Natural killer cell (primary cell): ENCODE measurements at regions of chr14 and their contacts with region 1.

Region 1: DNA sequence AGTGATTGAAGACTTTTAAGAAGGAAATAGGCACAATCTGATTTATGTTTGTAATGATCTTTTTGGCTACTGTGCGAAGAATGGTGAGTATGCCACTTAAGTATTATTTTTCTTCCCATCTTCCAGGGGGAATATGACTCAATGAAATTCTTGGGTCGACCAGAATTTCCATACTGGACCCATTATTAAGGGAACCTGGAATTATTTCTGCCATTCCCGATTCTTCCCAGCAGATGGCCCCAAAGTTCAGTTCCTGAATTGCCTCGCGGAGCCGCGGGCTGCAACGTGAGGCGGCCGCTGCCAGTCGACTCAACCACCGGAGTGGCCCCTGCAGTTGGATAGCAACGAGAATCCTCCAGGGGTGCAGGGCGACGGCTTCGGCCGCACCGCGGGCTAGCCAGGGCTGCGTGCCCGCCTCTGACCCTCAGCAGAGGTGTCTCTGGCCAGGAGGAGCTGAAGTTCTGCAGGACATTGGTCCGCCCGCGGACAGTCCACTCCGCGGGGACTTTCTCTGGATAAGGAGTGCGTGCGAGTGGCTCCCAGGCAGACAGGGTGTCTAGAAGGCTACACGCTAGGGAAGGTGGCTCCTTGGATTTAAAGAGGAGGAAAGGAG is 628 bp upstream of the TSHR start:
- DNase-seq: peak; percentile 60 to 87
- ATAC-seq: peak; percentile 80 to 82 (median 81)
- H3K4me3 ChIP-seq: peak overlapping the region; percentile 43
- H3K4me3 Mint-ChIP-seq: peak overlapping the region; percentile 89
- H3K27ac ChIP-seq: no peak overlapping the region
- H3K27ac Mint-ChIP-seq: peak overlapping the region; percentile 35 to 82
- H3K4me1 ChIP-seq: peaks cover 14% of the 10 kb centered on the region
- H3K4me1 Mint-ChIP-seq: peaks cover 22 to 24% of the 10 kb centered on the region in 2 donors
- H3K27me3 ChIP-seq: peaks cover 7% of the 10 kb centered on the region
- H3K27me3 Mint-ChIP-seq: peaks cover 33 to 46% of the 10 kb centered on the region in 2 donors
- CTCF ChIP-seq: peak; percentile 79

Region 2: DNA sequence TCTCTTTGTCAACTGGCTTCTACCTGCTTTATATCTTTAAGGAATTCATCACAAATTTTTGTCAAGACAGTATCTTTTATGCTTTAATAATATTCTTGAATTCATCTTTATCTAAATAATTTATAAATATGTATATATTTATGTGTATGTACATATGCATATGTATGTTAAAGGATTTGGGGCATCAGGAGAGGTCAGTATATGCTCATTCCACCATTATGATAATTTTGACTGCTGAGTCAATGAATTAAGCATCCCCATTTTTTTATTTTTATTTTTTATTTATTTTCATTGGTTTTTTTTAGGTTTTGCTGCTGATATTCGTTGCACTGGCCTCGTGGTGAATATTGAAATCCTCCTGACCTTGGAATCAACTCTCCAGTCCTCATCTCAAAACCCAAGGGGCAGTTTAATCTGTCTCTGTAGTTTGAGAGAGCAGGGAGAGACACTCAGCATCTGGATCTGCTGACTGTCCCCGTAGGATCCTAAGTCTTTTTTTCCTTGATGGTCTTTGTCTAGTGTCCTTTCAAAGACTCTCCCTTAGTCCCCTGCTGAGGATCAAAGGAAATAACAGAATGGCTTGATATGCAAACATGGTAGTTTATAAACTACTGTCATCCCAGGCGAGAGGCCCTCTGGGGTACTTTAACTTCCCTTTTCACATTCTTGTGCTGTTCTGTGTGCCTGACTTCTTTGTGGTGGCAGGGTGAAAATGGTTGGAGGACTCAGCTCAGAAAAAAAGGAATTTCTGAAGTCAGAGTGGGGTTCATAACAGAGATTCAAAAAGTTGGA is 962.2 kb before region 1 on chr14:
- intact Hi-C with region 1: no loop called
- DNase-seq: no peak
- ATAC-seq: no peak
- H3K4me3 ChIP-seq: no peak overlapping the region
- H3K4me3 Mint-ChIP-seq: no peak overlapping the region
- H3K27ac ChIP-seq: no peak overlapping the region
- H3K27ac Mint-ChIP-seq: no peak overlapping the region
- H3K4me1 ChIP-seq: no peaks in the 10 kb centered on the region
- H3K4me1 Mint-ChIP-seq: no peaks in the 10 kb centered on the region
- H3K27me3 ChIP-seq: no peaks in the 10 kb centered on the region
- H3K27me3 Mint-ChIP-seq: no peaks in the 10 kb centered on the region
- CTCF ChIP-seq: no peak

Region 3: GRCh38 chr14:80781577-80782367 is 173.0 kb before region 1 on chr14:
- intact Hi-C with region 1: no loop called
- DNase-seq: no peak
- ATAC-seq: no peak
- H3K4me3 ChIP-seq: no peak overlapping the region
- H3K4me3 Mint-ChIP-seq: no peak overlapping the region
- H3K27ac ChIP-seq: no peak overlapping the region
- H3K27ac Mint-ChIP-seq: no peak overlapping the region
- H3K4me1 ChIP-seq: no peaks in the 10 kb centered on the region
- H3K4me1 Mint-ChIP-seq: no peaks in the 10 kb centered on the region
- H3K27me3 ChIP-seq: no peaks in the 10 kb centered on the region
- H3K27me3 Mint-ChIP-seq: no peaks in the 10 kb centered on the region
- CTCF ChIP-seq: no peak

Region 4: DNA sequence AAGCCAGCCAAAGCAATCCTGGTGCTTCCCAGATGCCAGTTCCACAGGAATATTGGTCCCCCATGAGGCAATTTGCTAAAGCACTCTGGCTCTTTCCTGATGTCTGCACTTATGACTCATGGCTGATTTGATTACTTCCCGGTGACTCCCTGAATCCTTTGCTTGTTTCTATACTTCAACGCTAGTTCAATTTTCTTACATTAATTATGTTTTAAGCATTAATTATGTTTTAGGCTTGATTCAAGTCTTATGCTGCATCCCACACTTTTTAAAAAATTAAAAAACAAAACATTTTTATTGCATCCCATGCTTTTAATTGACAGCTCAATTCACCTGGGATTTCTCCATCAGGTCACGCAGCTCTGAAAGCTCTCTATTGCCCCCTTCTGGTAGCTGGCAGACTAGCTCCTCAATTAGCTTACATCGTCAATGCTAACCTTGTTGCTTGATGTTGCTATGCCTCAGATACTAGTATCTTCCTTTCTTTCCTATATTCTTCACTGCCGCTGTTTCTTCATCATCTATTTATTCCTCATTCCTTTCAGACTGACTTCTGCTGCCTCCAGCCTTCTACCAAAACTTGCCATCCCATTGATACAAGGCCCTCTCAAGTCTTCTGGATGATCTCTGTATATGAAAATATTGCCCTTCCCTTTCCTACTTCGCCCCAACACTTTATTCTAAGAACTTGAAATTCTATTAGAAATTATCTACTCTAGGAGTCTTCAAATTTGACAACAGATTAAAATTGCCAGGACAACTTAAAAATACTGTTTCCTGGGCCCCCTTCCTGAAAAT is 32.6 kb after region 1 on chr14:
- intact Hi-C with region 1: loop called (anchors 1 kb)
- DNase-seq: peak; percentile 36 to 86
- ATAC-seq: peak; percentile 74 to 82 (median 81)
- H3K4me3 ChIP-seq: no peak overlapping the region
- H3K4me3 Mint-ChIP-seq: no peak overlapping the region
- H3K27ac ChIP-seq: no peak overlapping the region
- H3K27ac Mint-ChIP-seq: no peak overlapping the region
- H3K4me1 ChIP-seq: no peaks in the 10 kb centered on the region
- H3K4me1 Mint-ChIP-seq: no peaks in the 10 kb centered on the region
- H3K27me3 ChIP-seq: no peaks in the 10 kb centered on the region
- H3K27me3 Mint-ChIP-seq: peaks cover 0 to 5% of the 10 kb centered on the region in 2 donors
- CTCF ChIP-seq: peak; percentile 97

Region 5: DNA sequence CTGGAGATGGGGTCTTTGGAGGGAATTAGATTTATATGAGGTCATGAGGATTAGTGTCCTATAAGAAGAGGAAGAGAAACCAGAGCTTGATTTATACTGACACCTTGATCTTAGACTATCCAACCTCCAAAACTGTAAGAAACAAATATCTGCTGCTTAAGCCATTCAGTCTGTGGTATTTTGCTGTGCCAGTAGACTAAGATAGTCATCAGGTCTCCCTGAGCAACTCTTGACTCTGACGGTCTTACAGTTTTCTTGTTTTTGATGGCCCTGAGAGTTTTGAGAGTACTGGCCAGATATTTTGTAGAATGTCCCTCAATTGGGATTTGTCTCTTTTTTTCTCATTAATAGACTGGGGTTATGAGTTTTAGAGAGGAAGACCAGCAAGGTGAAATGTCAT is 52.3 kb after region 1 on chr14:
- intact Hi-C with region 1: no loop called
- DNase-seq: no peak
- ATAC-seq: no peak
- H3K4me3 ChIP-seq: no peak overlapping the region
- H3K4me3 Mint-ChIP-seq: no peak overlapping the region
- H3K27ac ChIP-seq: no peak overlapping the region
- H3K27ac Mint-ChIP-seq: no peak overlapping the region
- H3K4me1 ChIP-seq: no peaks in the 10 kb centered on the region
- H3K4me1 Mint-ChIP-seq: no peaks in the 10 kb centered on the region
- H3K27me3 ChIP-seq: no peaks in the 10 kb centered on the region
- H3K27me3 Mint-ChIP-seq: peaks cover 0 to 3% of the 10 kb centered on the region in 2 donors
- CTCF ChIP-seq: no peak

Region 6: GRCh38 chr14:81170104-81170828 is 215.5 kb after region 1 on chr14:
- intact Hi-C with region 1: loop called (anchors 1 kb)
- DNase-seq: peak; percentile 85 to 92
- ATAC-seq: peak; percentile 97 to 99 (median 97)
- H3K4me3 ChIP-seq: peak overlapping the region; percentile 54
- H3K4me3 Mint-ChIP-seq: peak overlapping the region; percentile 91
- H3K27ac ChIP-seq: peak overlapping the region; percentile 76
- H3K27ac Mint-ChIP-seq: peak overlapping the region; percentile 91 to 96
- H3K4me1 ChIP-seq: peaks cover 8% of the 10 kb centered on the region
- H3K4me1 Mint-ChIP-seq: peaks cover 18 to 24% of the 10 kb centered on the region in 2 donors
- H3K27me3 ChIP-seq: no peaks in the 10 kb centered on the region
- H3K27me3 Mint-ChIP-seq: no peaks in the 10 kb centered on the region
- CTCF ChIP-seq: peak; percentile 83

Region 7: DNA sequence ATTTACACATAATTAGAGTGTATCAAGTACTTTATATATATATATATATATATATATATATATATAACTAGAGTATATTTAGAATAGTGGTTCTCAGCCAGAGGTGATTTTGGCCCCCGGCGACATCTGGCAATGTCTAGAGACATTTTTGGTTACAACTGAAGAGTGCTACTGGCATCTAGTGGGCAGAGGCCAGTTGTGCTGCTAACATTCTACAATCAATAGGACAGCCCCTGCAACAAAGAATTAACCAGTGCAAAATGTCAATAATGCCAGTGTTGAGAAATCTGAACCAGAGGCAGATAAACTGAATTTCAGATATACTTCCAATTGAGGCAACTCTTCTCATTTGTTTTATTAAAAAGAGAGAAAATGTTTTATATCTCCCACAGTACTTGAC is 257.1 kb after region 1 on chr14:
- intact Hi-C with region 1: loop called (anchors 1 kb)
- DNase-seq: peak in 1 of 2 donors; percentile 65
- ATAC-seq: peak; percentile 66 to 95 (median 83)
- H3K4me3 ChIP-seq: no peak overlapping the region
- H3K4me3 Mint-ChIP-seq: no peak overlapping the region
- H3K27ac ChIP-seq: no peak overlapping the region
- H3K27ac Mint-ChIP-seq: peak overlapping the region in 1 of 2 donors; percentile 50
- H3K4me1 ChIP-seq: no peaks in the 10 kb centered on the region
- H3K4me1 Mint-ChIP-seq: peaks cover 46 to 47% of the 10 kb centered on the region in 2 donors
- H3K27me3 ChIP-seq: no peaks in the 10 kb centered on the region
- H3K27me3 Mint-ChIP-seq: no peaks in the 10 kb centered on the region
- CTCF ChIP-seq: peak; percentile 54

Region 8: GRCh38 chr14:81464247-81465002 is 509.6 kb after region 1 on chr14:
- intact Hi-C with region 1: loop called (anchors 2 kb)
- DNase-seq: peak in 1 of 2 donors; percentile 88
- ATAC-seq: peak; percentile 80 to 85 (median 84)
- H3K4me3 ChIP-seq: peak overlapping the region; percentile 79
- H3K4me3 Mint-ChIP-seq: peak overlapping the region; percentile 90
- H3K27ac ChIP-seq: peak overlapping the region; percentile 82
- H3K27ac Mint-ChIP-seq: peak overlapping the region; percentile 77 to 87
- H3K4me1 ChIP-seq: peaks cover 2% of the 10 kb centered on the region
- H3K4me1 Mint-ChIP-seq: peaks cover 0 to 7% of the 10 kb centered on the region in 2 donors
- H3K27me3 ChIP-seq: no peaks in the 10 kb centered on the region
- H3K27me3 Mint-ChIP-seq: no peaks in the 10 kb centered on the region
- CTCF ChIP-seq: peak; percentile 84